ENCODE measurements at regions of chr2 and their contacts with region 1.

Region 1: DNA sequence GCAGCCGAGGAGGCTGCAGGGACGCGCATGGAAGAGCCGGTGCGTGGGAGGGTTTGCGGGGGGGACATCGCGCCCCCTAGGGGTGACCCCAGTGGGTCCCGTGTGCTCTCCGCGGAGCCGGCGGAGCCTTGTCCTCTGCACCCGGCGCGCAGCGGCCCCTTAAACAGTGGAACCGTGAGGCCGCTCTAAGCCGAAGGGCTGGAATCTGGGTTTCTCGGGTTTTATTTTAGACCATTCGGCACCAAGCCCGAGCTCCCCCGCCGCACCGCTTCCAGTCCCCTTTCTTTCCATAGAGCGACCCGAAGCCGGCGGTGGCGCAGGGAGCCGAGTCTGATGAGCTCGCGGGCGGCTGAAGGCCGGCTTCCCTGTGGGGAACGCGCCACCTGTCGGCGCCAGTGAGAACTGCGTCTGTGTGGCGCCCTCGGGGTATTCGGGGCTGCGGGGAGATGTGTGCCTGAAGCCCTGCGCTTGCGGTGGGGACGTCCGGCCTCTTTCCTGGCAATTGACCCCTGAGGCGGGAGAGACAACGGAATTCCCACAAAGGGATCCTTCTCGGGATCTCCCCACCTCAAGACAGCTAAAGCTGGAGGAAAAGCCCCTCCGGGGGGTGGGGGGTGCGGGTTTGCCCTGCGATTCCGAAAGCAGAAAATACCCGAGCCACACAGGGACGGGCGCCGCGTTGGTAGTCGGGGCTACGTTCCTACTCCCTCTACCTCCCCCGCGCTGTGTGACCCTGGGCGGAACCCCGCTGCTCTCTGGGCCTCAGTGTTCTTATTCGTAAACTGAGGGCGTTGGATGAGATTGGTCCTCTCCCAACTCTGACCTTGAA is 8.2 kb upstream of the EN1 start:
- DNase-seq: no peak
- H3K4me3 ChIP-seq: peak overlapping the region; percentile 16 to 27
- H3K27ac ChIP-seq: no peak overlapping the region
- H3K4me1 ChIP-seq: peaks cover 39% of the 10 kb centered on the region
- H3K27me3 ChIP-seq: peaks cover 31% of the 10 kb centered on the region
- CTCF ChIP-seq: peak; percentile 85 to 97 (median 85)
- POLR2A ChIP-seq: no peak

Region 2: DNA sequence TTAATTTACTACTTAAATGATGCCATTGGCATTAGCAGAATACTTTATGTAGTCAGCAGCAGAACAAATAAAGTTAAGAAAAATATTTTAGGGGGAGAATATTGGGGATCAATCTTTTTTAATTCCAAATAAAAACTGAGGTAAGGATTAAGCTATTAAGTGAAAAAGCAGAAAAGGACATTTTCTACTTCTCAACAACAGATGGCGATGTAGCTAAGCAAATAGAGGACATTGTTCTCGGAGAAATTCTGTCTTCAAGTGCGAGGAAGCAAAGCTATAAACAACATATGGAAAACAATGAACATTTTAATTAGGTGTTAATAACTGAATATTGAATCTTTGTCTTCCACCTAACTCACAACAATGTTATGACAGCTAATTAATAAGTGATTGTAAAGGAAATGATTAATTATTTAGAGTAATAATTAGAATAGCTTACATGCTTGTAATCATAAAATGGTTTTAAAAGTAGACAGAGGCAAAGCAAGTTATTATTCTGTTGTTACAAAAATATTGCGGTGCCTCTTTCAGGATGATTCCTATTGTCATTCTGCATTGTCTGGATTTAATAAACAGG is 808.9 kb before region 1 on chr2:
- intact Hi-C with region 1: loop called (anchors 5 kb)
- DNase-seq: no peak
- H3K4me3 ChIP-seq: no peak overlapping the region
- H3K27ac ChIP-seq: no peak overlapping the region
- H3K4me1 ChIP-seq: peaks cover 5% of the 10 kb centered on the region
- H3K27me3 ChIP-seq: no peaks in the 10 kb centered on the region
- CTCF ChIP-seq: peak in 2 of 3 experiments; percentile 35 to 45
- POLR2A ChIP-seq: no peak

Region 3: DNA sequence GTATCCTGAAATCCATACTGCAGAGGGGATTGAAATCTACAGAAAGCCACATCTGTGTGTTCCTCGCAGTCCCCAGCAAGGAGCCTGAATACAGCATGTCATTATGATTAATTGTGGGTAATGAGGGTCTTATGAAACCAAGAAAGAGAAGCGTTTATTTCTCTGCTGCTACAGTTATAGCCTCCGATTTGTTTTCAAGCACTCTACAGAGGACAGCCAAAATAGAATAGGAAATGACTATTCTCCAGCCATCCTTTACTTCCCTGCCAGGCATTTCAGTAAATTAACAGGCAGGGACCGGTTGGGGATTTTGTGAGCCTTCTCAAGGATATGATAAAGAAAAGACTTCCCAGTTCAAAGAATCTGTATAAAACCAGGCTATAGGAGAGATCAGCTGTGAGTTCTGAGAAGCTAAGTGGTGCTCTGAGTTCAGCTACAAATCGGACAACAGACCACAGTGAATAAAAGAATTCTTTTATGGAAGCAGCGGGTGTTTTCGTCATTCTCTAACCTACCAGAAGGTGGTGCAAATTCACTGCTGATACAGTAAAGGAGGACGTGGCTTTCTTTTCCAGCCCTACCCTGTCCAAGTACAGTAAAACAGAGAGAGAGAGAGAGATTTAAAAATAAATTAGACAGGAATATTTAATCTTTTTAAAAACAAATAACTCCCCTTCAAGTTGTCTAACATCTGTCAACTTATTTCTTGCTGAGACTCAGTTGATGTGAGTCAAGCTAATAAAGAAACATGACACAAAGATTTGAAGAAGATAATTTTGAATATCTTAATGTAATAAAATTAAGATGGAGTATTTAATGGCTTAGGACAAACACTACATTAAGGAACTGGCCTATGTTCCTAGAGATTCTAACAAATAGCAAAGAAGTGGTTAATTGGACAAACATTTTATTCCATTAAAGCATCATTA is 633.7 kb before region 1 on chr2:
- intact Hi-C with region 1: loop called (anchors 5 kb)
- DNase-seq: no peak
- H3K4me3 ChIP-seq: no peak overlapping the region
- H3K27ac ChIP-seq: no peak overlapping the region
- H3K4me1 ChIP-seq: peaks cover 15% of the 10 kb centered on the region
- H3K27me3 ChIP-seq: peaks cover 8% of the 10 kb centered on the region
- CTCF ChIP-seq: peak in 2 of 3 experiments; percentile 12 to 33
- POLR2A ChIP-seq: no peak